Caco-2 (cell line): ENCODE measurements at regions of chr12 and their contacts with region 1.

Region 1: GRCh38 chr12:68972595-68972994 is 39.6 kb upstream of the CPM start:
- DNase-seq: peak; percentile 29 to 38
- H3K4me3 ChIP-seq: no peak overlapping the region
- H3K4me3 Mint-ChIP-seq: no peak overlapping the region
- H3K27ac Mint-ChIP-seq: no peak overlapping the region
- H3K4me1 ChIP-seq: peaks cover 20% of the 10 kb centered on the region
- H3K4me1 Mint-ChIP-seq: peaks cover 7% of the 10 kb centered on the region
- H3K27me3 ChIP-seq: no peaks in the 10 kb centered on the region
- H3K27me3 Mint-ChIP-seq: no peaks in the 10 kb centered on the region
- CTCF ChIP-seq: no peak

Region 2: GRCh38 chr12:68915055-68915454 is 57.5 kb before region 1 on chr12:
- CTCF ChIA-PET with region 1: no interaction called
- POLR2A ChIA-PET with region 1: no interaction called
- intact Hi-C with region 1: no loop called
- DNase-seq: no peak
- H3K4me3 ChIP-seq: no peak overlapping the region
- H3K4me3 Mint-ChIP-seq: no peak overlapping the region
- H3K27ac Mint-ChIP-seq: no peak overlapping the region
- H3K4me1 ChIP-seq: no peaks in the 10 kb centered on the region
- H3K4me1 Mint-ChIP-seq: no peaks in the 10 kb centered on the region
- H3K27me3 ChIP-seq: no peaks in the 10 kb centered on the region
- H3K27me3 Mint-ChIP-seq: no peaks in the 10 kb centered on the region
- CTCF ChIP-seq: no peak

Region 3: DNA sequence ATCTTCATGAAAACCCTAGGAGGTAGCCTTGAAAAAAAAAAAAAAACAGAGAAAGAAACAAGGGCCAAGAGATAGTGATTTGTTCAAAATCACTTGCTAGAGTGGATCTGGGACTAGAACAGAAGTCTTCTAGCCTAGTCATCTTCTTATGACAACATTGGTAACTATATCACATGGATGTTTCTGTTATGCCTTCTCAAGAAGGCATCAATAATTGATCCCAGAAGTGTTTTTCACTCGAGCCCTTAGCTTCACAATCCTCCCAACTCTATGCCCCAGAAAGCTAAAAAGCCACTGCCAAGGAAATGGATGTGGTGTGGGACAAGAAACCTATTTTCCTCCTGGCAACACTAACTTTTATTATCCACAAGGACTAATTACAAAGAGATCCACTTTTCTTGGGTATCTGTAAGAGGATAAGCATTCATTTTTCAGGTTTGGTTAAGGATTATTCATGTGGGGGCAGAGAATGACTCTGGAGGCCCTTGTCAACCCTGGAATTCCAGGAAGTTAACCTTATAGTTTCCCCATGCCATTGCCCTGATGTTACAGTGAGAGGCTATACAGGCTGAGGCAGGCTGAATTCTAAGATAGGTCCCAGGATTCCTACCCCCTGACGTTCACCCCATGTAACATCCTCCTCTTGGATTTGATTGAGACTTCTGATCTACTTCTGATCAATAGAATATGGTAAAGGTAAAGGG is 28.1 kb after region 1 on chr12:
- CTCF ChIA-PET with region 1: no interaction called
- POLR2A ChIA-PET with region 1: no interaction called
- intact Hi-C with region 1: loop called (anchors 2 kb)
- DNase-seq: peak in 1 of 2 experiments; percentile 32
- H3K4me3 ChIP-seq: no peak overlapping the region
- H3K4me3 Mint-ChIP-seq: no peak overlapping the region
- H3K27ac Mint-ChIP-seq: peak overlapping the region; percentile 60
- H3K4me1 ChIP-seq: peaks cover 10% of the 10 kb centered on the region
- H3K4me1 Mint-ChIP-seq: peaks cover 18% of the 10 kb centered on the region
- H3K27me3 ChIP-seq: no peaks in the 10 kb centered on the region
- H3K27me3 Mint-ChIP-seq: no peaks in the 10 kb centered on the region
- CTCF ChIP-seq: no peak

Region 4: GRCh38 chr12:69070319-69071090 is 97.9 kb after region 1 on chr12:
- CTCF ChIA-PET with region 1: no interaction called
- POLR2A ChIA-PET with region 1: no interaction called
- intact Hi-C with region 1: no loop called
- DNase-seq: peak; percentile 67 to 74
- H3K4me3 ChIP-seq: no peak overlapping the region
- H3K4me3 Mint-ChIP-seq: no peak overlapping the region
- H3K27ac Mint-ChIP-seq: no peak overlapping the region
- H3K4me1 ChIP-seq: no peaks in the 10 kb centered on the region
- H3K4me1 Mint-ChIP-seq: no peaks in the 10 kb centered on the region
- H3K27me3 ChIP-seq: no peaks in the 10 kb centered on the region
- H3K27me3 Mint-ChIP-seq: no peaks in the 10 kb centered on the region
- CTCF ChIP-seq: peak; percentile 83 to 91